Panc1 (cell line): ENCODE measurements at regions of chr5 and their contacts with region 1.

Region 1: DNA sequence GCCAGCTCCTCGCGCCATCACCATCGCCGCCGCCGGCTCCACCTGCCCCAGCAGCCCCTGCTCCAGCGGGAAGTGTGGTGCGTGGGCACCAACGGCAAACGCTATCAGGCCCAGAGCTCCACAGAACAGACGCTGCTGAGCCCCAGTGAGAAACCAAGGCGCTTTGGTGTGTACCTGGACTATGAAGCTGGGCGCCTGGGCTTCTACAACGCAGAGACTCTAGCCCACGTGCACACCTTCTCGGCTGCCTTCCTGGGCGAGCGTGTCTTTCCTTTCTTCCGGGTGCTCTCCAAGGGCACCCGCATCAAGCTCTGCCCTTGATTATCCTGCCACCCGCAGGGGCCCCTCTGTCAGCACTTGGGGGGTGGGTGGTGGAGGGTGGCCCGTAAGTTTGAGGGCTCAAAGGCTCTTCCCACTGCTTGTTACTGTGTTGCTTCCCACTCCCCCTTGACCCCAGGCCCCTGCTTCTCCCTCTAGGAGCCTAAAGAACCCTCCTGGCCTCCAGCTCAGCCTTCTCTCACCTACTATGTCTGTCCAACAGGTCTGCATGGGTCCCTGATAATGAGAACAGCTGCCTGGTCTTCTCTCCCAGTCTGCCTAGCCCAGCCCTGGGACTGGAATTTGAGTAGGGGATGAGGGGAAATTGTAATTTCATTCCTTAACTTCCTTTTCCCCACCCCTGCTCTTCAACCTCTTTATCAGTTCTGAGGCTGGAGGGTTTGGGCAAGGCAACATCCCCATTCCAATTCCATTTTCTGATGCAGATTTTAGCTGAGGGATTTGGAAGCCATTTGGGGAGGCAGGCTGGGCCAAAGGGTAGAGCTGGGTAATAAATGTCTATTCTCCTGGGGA is 9.0 kb downstream of the RACK1 start:
- DNase-seq: no peak
- ATAC-seq: peak; percentile 46
- H3K4me3 ChIP-seq: no peak overlapping the region
- H3K27ac ChIP-seq: no peak overlapping the region
- H3K4me1 ChIP-seq: peaks cover 9% of the 10 kb centered on the region
- H3K27me3 ChIP-seq: no peaks in the 10 kb centered on the region
- CTCF ChIP-seq: no peak

Region 2: GRCh38 chr5:180704368-180704869 is 530.3 kb before region 1 on chr5:
- CTCF ChIA-PET with region 1: no interaction called
- POLR2A ChIA-PET with region 1: no interaction called
- in situ Hi-C with region 1: no loop called
- intact Hi-C with region 1: no loop called
- DNase-seq: peak; percentile 2
- ATAC-seq: no peak
- H3K4me3 ChIP-seq: no peak overlapping the region
- H3K27ac ChIP-seq: no peak overlapping the region
- H3K4me1 ChIP-seq: no peaks in the 10 kb centered on the region
- H3K27me3 ChIP-seq: peaks cover 6% of the 10 kb centered on the region
- CTCF ChIP-seq: no peak

Region 3: GRCh38 chr5:181207214-181208107 is 27.2 kb before region 1 on chr5:
- CTCF ChIA-PET with region 1: no interaction called
- POLR2A ChIA-PET with region 1: interaction called, 10 read pairs
- in situ Hi-C with region 1: no loop called
- intact Hi-C with region 1: no loop called
- DNase-seq: peak; percentile 98
- ATAC-seq: peak; percentile 67
- H3K4me3 ChIP-seq: peak overlapping the region; percentile 52 to 78
- H3K27ac ChIP-seq: peak overlapping the region; percentile 75
- H3K4me1 ChIP-seq: peaks cover 17% of the 10 kb centered on the region
- H3K27me3 ChIP-seq: no peaks in the 10 kb centered on the region
- CTCF ChIP-seq: no peak